HepG2 (cell line): ENCODE measurements at regions of chr18 and their contacts with region 1.

Region 1: GRCh38 chr18:47050468-47050867 is 15.0 kb upstream of the ELOA2 start:
- DNase-seq: peak; percentile 40
- ATAC-seq: peak; percentile 62; the same call in 1 of the 3 replicates
- H3K4me3 ChIP-seq: no peak overlapping the region
- H3K27ac ChIP-seq: no peak overlapping the region
- H3K4me1 ChIP-seq: no peaks in the 10 kb centered on the region
- H3K27me3 ChIP-seq: peaks cover 0 to 20% of the 10 kb centered on the region in 2 experiments; a peak in 3 of 5 replicates
- CTCF ChIP-seq: peak; percentile 76
- EP300 ChIP-seq: no peak
- POLR2A ChIP-seq: no peak
- RAD21 ChIP-seq: peak; percentile 37; the same call in 1 of the 2 replicates

Region 2: DNA sequence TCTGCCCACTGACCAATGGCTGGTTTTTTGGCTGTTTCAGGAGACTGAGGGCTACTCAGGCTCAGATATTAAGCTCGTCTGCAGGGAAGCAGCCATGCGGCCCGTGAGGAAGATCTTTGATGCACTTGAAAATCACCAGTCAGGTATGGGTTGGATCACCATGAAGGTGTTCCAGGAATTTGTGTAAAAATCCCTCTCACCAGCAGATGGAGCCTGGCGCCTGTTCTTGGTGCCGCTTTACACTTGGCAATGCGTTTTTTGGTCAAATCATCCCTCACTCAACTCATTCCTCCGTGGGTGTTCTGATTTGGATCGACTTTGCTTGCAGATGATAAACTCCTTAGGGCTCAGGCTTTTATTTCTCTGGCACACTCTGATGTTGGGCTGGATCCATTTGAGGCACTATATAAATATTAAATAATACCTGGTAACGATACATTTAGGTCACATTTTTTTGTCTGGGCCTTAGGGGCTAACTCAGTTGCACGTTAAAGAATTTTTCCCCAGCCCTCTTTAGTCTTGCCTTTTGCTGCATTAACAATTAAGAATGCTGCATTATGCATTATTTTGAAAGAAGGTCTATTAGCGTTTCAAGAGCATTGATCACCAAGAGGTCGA is 49.9 kb after region 1 on chr18:
- CTCF ChIA-PET with region 1: no interaction called
- POLR2A ChIA-PET with region 1: no interaction called
- in situ Hi-C with region 1: no loop called
- intact Hi-C with region 1: loop called (anchors 2 kb)
- DNase-seq: peak; percentile 44
- ATAC-seq: peak; percentile 86
- H3K4me3 ChIP-seq: no peak overlapping the region
- H3K27ac ChIP-seq: no peak overlapping the region
- H3K4me1 ChIP-seq: peaks cover 18% of the 10 kb centered on the region
- H3K27me3 ChIP-seq: no peaks in the 10 kb centered on the region
- CTCF ChIP-seq: peak; percentile 81
- EP300 ChIP-seq: no peak
- POLR2A ChIP-seq: no peak
- RAD21 ChIP-seq: peak; percentile 79

Region 3: DNA sequence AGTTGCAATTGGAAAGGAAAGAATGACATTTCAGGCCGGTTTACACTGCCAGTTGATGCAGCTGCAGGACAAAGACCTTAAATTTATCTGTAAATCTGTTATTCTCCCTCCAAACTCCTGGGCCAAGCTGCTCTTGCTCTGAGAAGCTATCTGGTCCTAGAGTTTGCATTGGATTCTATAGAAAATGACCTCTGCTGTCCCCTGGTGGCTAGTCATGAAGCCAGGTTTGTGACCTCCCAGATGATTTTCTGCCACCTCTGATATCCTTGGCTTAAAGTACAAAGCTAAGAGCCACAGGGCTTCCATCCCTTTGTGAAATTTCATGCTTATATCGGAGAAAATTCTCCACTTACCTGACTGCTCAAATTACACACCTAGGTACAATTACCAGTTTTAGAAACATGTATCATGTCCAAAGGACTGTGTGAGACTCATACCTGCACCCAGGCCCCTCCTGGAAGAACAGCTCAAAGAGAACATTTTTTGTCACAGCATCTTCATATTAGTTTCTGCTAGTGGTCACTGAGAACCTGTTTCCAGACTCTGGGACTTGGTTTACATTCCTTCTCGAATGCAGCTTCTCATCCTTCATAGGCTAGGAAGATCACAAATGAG is 154.5 kb after region 1 on chr18:
- CTCF ChIA-PET with region 1: interaction called, 13 read pairs
- POLR2A ChIA-PET with region 1: no interaction called
- in situ Hi-C with region 1: no loop called
- intact Hi-C with region 1: loop called (anchors 1 kb)
- DNase-seq: peak; percentile 40
- ATAC-seq: peak; percentile 82
- H3K4me3 ChIP-seq: no peak overlapping the region
- H3K27ac ChIP-seq: no peak overlapping the region
- H3K4me1 ChIP-seq: no peaks in the 10 kb centered on the region
- H3K27me3 ChIP-seq: peaks cover 0 to 3% of the 10 kb centered on the region in 2 experiments; a peak in 1 of 5 replicates
- CTCF ChIP-seq: peak; percentile 79
- EP300 ChIP-seq: no peak
- POLR2A ChIP-seq: no peak
- RAD21 ChIP-seq: peak; percentile 59; the same call in 1 of the 2 replicates

Region 4: DNA sequence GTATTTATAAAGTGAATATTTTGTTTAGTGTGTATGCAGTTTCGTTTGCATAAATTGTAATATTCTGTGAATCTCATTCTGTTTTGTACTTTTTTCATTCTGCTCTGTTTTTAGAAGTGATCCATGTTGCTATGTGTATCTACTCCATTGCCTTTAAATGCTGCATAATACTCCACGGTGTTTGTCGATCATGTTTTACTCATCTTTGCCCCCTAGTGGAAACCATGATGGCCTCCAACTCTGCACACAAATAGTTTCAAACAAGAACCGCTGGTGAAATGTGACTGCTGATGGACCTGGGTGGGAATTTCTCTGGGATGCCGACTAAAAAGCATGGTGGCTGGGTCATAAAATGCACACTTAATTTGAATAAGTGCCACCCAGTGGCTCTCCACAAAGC is 233.0 kb after region 1 on chr18:
- CTCF ChIA-PET with region 1: no interaction called
- POLR2A ChIA-PET with region 1: no interaction called
- in situ Hi-C with region 1: no loop called
- intact Hi-C with region 1: loop called (anchors 1 kb)
- DNase-seq: peak; percentile 39
- ATAC-seq: peak; percentile 90
- H3K4me3 ChIP-seq: no peak overlapping the region
- H3K27ac ChIP-seq: no peak overlapping the region
- H3K4me1 ChIP-seq: peaks cover 5% of the 10 kb centered on the region; the same call in 1 of the 2 replicates
- H3K27me3 ChIP-seq: no peaks in the 10 kb centered on the region; a peak in 1 of 5 replicates
- CTCF ChIP-seq: peak; percentile 63
- EP300 ChIP-seq: no peak
- POLR2A ChIP-seq: no peak
- RAD21 ChIP-seq: peak; percentile 28; the same call in 1 of the 2 replicates

Region 5: DNA sequence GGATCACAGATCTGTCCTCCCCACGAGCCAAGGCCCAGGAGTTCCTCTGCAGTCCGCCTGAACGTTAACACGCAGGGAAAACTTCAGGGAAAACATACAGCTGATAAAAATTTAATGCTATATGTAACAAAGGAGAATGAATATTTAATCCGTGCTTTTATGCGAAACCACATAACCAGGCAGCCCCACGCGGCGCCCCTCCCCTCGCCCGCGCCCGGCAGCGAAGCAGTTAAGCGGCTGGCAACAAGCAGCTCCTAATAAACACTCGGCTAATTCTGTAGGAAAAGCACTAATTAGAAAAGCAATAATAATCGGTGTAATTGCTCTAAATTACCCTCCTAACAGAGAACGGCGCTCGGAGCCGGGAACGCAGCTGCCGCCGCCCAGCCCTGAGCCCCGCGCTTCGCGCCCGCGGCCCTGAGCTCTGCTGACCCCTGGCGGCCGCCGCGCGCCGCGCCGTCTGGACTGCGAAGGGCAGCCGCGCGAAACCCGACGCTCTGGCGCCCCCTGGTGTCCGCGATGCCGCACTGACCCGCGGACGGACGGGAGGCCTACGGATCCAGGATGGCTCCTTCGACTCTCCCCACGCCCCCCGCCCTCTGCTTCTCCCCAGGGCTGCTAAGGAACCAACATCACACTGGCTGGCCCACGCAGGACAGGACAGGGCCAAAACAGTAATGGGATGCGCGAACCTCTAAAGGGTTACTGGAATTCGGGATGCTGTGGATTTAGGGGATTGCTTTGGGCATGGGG is 698.6 kb after region 1 on chr18:
- CTCF ChIA-PET with region 1: interaction called, 15 read pairs
- POLR2A ChIA-PET with region 1: no interaction called
- in situ Hi-C with region 1: no loop called
- intact Hi-C with region 1: no loop called
- DNase-seq: peak; percentile 27
- ATAC-seq: peak; percentile 97
- H3K4me3 ChIP-seq: no peak overlapping the region
- H3K27ac ChIP-seq: no peak overlapping the region
- H3K4me1 ChIP-seq: no peaks in the 10 kb centered on the region
- H3K27me3 ChIP-seq: peaks cover 0 to 12% of the 10 kb centered on the region in 2 experiments; a peak in 1 of 5 replicates
- CTCF ChIP-seq: peak; percentile 94
- EP300 ChIP-seq: no peak
- POLR2A ChIP-seq: no peak
- RAD21 ChIP-seq: peak; percentile 99

Region 6: GRCh38 chr18:47756364-47757016 is 706.0 kb after region 1 on chr18:
- CTCF ChIA-PET with region 1: no interaction called
- POLR2A ChIA-PET with region 1: no interaction called
- in situ Hi-C with region 1: no loop called
- intact Hi-C with region 1: loop called (anchors 1 kb)
- DNase-seq: peak; percentile 46
- ATAC-seq: peak; percentile 80
- H3K4me3 ChIP-seq: no peak overlapping the region
- H3K27ac ChIP-seq: no peak overlapping the region
- H3K4me1 ChIP-seq: no peaks in the 10 kb centered on the region
- H3K27me3 ChIP-seq: peaks cover 0 to 1% of the 10 kb centered on the region in 2 experiments; a peak in 1 of 5 replicates
- CTCF ChIP-seq: peak; percentile 92
- EP300 ChIP-seq: no peak
- POLR2A ChIP-seq: no peak
- RAD21 ChIP-seq: 0 out of 2 replicates have a peak, but pooled peaks have one; percentile 31